GM12878 (cell line): ENCODE measurements at regions of chr3 and their contacts with region 1.

Region 1: DNA sequence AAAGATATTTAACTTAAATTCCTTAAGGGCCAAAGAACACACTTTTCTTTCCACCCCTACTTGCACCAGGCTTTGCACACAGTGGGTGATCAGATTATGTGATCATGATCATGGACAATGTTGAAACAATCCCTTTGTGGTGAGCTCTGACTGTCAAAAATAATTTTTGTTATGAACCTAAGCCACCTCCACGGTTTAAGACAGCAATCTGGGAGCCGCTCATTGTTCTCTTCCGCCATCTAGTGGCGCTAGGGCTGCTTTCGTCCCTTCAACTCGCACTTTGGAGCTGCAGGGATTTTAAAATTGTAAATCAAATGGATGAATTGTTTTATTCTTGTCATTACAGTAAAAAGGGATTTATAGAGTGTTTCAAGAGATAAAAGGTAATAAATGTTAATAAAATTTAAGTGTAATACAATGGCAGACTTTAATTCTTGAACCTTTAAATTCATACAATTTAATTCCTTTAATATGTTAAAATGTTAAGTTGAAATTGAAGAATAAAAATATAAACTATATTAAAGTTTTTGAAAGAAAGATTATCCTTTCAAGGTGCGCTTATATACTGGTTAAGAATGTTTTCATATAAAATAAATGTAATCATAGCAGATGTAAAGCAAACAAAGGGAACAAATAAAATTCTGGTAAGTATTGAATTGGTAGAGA is 45.3 kb upstream of the ARL6 start:
- DNase-seq: peak; percentile 11
- ATAC-seq: peak; percentile 96
- H3K4me3 ChIP-seq: no peak overlapping the region
- H3K27ac ChIP-seq: no peak overlapping the region
- H3K4me1 ChIP-seq: no peaks in the 10 kb centered on the region
- H3K27me3 ChIP-seq: no peaks in the 10 kb centered on the region
- CTCF ChIP-seq: peak; percentile 89 to 94 (median 90)
- EP300 ChIP-seq: no peak
- POLR2A ChIP-seq: no peak
- RAD21 ChIP-seq: peak; percentile 86

Region 2: DNA sequence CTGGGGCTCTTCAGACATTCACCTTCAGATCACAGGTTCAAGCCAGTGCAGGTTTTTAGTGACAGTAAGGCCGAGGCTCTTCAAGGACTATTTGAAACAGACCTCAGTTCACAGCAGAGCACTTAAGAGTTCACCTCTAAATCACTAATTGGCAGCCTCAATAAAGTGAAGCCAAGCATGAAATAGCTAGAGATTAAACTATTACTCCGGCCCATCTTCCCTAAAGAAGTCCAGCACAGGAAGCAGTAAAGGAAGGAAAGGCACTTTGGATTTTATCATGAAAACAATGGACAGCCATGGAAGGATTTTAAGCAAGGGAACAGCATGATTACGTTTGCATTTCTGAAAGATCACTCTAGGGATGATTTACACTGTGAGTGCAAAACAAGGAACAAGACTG is 17.6 kb after region 1 on chr3:
- CTCF ChIA-PET with region 1: interaction called, 12 read pairs
- POLR2A ChIA-PET with region 1: no interaction called
- RAD21 ChIA-PET with region 1: no interaction called
- SMC1A ChIA-PET with region 1: interaction called, 3 read pairs
- in situ Hi-C with region 1: no loop called
- intact Hi-C with region 1: no loop called
- DNase-seq: no peak
- ATAC-seq: no peak
- H3K4me3 ChIP-seq: no peak overlapping the region
- H3K27ac ChIP-seq: no peak overlapping the region
- H3K4me1 ChIP-seq: no peaks in the 10 kb centered on the region
- H3K27me3 ChIP-seq: no peaks in the 10 kb centered on the region
- CTCF ChIP-seq: no peak
- EP300 ChIP-seq: no peak
- POLR2A ChIP-seq: no peak
- RAD21 ChIP-seq: no peak

Region 3: GRCh38 chr3:97882975-97883598 is 163.8 kb after region 1 on chr3:
- CTCF ChIA-PET with region 1: no interaction called
- POLR2A ChIA-PET with region 1: no interaction called
- RAD21 ChIA-PET with region 1: no interaction called
- SMC1A ChIA-PET with region 1: no interaction called
- in situ Hi-C with region 1: no loop called
- intact Hi-C with region 1: no loop called
- DNase-seq: no peak
- ATAC-seq: no peak
- H3K4me3 ChIP-seq: no peak overlapping the region
- H3K27ac ChIP-seq: no peak overlapping the region
- H3K4me1 ChIP-seq: no peaks in the 10 kb centered on the region
- H3K27me3 ChIP-seq: no peaks in the 10 kb centered on the region
- CTCF ChIP-seq: no peak
- EP300 ChIP-seq: no peak
- POLR2A ChIP-seq: no peak
- RAD21 ChIP-seq: no peak

Region 4: GRCh38 chr3:98855806-98856400 is 1136.6 kb after region 1 on chr3:
- CTCF ChIA-PET with region 1: no interaction called
- POLR2A ChIA-PET with region 1: no interaction called
- RAD21 ChIA-PET with region 1: no interaction called
- SMC1A ChIA-PET with region 1: no interaction called
- in situ Hi-C with region 1: no loop called
- intact Hi-C with region 1: no loop called
- DNase-seq: no peak
- ATAC-seq: no peak
- H3K4me3 ChIP-seq: no peak overlapping the region
- H3K27ac ChIP-seq: no peak overlapping the region
- H3K4me1 ChIP-seq: no peaks in the 10 kb centered on the region
- H3K27me3 ChIP-seq: no peaks in the 10 kb centered on the region
- CTCF ChIP-seq: no peak
- EP300 ChIP-seq: no peak
- POLR2A ChIP-seq: no peak
- RAD21 ChIP-seq: no peak